Common myeloid progenitor, CD34-positive (primary cell): ENCODE measurements at regions of chr16 and their contacts with region 1.

Region 1: DNA sequence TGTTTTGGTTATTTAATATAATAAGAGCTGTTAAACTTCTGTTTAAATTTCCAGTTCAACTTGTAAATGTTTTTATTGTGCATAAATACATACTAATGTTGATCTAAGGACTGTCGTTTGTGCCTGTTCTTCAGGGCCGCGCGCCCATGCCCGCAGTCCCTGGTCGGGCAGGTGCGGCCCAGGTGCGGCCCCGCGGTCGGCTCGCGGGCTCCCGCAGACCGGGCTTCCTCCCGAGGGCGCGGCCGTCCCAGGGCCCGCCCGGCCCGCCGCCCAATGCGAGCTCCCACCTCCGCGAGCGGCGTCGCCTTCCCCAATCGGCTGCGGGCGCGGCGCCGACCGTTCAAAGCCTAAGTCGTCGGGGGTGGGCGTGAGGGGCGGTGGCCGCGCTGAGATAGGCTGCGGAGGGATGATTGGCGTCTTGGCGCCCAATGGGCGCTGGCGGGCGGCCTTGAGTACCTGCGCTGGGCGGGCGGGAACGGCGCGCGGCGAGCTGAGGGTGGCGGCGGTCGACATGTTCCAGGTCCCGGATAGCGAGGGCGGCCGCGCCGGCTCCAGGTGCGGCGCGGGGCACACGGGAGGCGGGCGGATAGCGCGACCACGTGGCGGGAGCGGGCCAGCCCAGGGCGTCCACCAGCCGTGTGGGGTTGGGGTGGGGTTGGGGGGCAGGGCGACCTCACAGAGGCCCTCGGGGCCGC is at the start of gene JPT2:
- DNase-seq: peak; percentile 96 to 98 (median 98)
- H3K4me3 ChIP-seq: peak within 1 kb of the TSS; percentile 50 to 91 (median 75)
- H3K27ac ChIP-seq: peak within 1 kb of the TSS; percentile 25 to 84
- H3K4me1 ChIP-seq: peaks cover 4 to 29% (median 16%) of the 10 kb centered on the region in 4 experiments
- H3K27me3 ChIP-seq: no peaks in the 10 kb centered on the region

Region 2: GRCh38 chr16:1705688-1706385 is 27.9 kb after region 1 on chr16 and contains the start of gene MAPK8IP3:
- CTCF ChIA-PET with region 1: interaction called, 11 read pairs
- POLR2A ChIA-PET with region 1: interaction called, 6 read pairs
- DNase-seq: peak; percentile 84 to 94 (median 92)
- H3K4me3 ChIP-seq: peak within 1 kb of the TSS; percentile 60 to 98 (median 91)
- H3K27ac ChIP-seq: peak within 1 kb of the TSS; percentile 64 to 87
- H3K4me1 ChIP-seq: peaks cover 0 to 32% (median 24%) of the 10 kb centered on the region in 4 experiments
- H3K27me3 ChIP-seq: no peaks in the 10 kb centered on the region